ENCODE measurements at regions of chr19 and their contacts with region 1.

Region 1: GRCh38 chr19:38335949-38336637 is 463 bp downstream of the CATSPERG start:
- DNase-seq: peak; percentile 95
- H3K4me3 Mint-ChIP-seq: peak overlapping the region; percentile 95
- H3K27ac Mint-ChIP-seq: peak overlapping the region; percentile 100
- H3K4me1 Mint-ChIP-seq: peaks cover 7% of the 10 kb centered on the region
- H3K27me3 Mint-ChIP-seq: no peaks in the 10 kb centered on the region

Region 2: DNA sequence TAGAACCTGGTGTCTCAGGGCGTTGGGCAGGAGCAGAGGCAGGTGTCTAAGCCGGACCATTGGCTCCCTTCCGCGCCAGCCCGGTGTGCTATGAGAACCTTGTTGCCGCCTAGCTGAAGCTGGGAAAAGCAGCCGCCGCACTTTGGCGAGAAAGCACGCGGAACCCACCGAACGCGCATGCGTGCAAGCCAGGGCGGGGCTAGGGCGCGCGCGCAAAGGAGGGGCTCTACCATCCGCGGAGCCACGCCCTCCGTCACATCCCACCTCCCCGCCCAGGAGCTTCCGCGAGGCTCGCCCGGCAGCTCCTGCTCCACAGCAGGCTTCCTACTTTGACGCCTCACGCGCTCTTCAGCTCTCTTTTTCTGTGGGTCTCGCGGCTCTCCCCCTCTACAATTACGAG is 481.0 kb before region 1 on chr19:
- intact Hi-C with region 1: no loop called
- DNase-seq: peak; percentile 9
- H3K4me3 Mint-ChIP-seq: no peak overlapping the region
- H3K27ac Mint-ChIP-seq: no peak overlapping the region
- H3K4me1 Mint-ChIP-seq: no peaks in the 10 kb centered on the region
- H3K27me3 Mint-ChIP-seq: no peaks in the 10 kb centered on the region

Region 3: DNA sequence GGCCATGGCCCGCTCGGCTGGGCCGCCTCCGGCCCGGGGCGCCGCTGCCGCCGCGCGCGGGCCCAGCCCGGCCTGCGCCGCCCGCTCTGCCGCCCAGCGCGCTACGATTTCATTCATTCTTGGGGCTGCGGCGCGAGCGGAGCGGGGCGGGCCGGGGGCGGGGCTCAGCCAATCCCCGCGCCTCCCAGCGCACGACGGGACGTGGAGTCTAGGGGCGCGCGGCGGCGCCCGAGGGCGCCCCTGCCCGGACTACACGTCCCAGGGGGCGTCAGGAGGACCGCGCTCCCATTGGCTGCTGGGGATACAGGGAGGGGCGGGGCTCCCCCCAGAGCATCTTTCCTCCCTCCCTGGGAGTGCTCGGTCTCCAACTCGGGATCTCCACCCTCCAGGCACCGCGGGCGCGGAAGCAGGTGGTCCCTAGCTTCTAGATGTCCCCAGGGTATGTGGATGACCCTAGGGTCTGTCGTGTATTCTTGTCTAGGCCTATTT is 106.5 kb before region 1 on chr19:
- intact Hi-C with region 1: loop called (anchors 1 kb)
- DNase-seq: peak; percentile 71
- H3K4me3 Mint-ChIP-seq: peak overlapping the region; percentile 26
- H3K27ac Mint-ChIP-seq: no peak overlapping the region
- H3K4me1 Mint-ChIP-seq: peaks cover 10% of the 10 kb centered on the region
- H3K27me3 Mint-ChIP-seq: peaks cover 43% of the 10 kb centered on the region

Region 4: DNA sequence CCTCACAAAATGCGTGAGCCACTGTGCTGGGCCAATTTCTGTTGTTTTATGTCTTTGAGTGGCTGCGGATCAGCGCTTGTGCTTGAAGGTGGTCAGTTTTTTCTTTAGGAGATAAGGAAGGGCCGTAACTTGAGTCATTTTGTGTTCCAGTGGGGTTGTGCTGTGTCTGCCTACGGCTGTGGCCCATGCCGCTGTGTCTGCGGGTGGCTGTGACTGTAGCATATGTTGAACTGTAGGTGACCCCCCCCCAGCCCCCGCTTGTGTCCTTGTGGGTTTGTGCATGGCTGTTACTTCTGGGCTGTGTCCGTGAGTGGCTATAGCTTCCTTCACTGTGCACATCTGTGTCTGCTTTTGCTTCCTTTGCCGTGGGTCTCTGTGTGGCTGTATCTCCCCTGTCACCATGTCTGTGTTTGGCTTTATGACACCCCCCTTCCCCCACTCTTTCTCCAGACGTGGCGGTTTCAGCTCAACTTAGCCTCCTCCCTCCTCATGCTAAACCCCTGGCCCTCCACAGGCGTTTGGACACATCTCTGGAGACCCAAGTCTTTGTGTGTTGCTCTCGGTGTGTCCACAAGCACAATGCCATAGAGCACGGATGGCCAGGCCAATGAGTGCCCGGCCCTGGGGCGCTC is 80.6 kb before region 1 on chr19:
- intact Hi-C with region 1: loop called (anchors 5 kb)
- DNase-seq: no peak
- H3K4me3 Mint-ChIP-seq: peak overlapping the region; percentile 84
- H3K27ac Mint-ChIP-seq: peak overlapping the region; percentile 64
- H3K4me1 Mint-ChIP-seq: peaks cover 23% of the 10 kb centered on the region
- H3K27me3 Mint-ChIP-seq: no peaks in the 10 kb centered on the region

Region 5: GRCh38 chr19:38266981-38267597 is 69.0 kb before region 1 on chr19:
- intact Hi-C with region 1: no loop called
- DNase-seq: no peak
- H3K4me3 Mint-ChIP-seq: peak overlapping the region; percentile 26
- H3K27ac Mint-ChIP-seq: peak overlapping the region; percentile 67
- H3K4me1 Mint-ChIP-seq: peaks cover 58% of the 10 kb centered on the region
- H3K27me3 Mint-ChIP-seq: no peaks in the 10 kb centered on the region

Region 6: DNA sequence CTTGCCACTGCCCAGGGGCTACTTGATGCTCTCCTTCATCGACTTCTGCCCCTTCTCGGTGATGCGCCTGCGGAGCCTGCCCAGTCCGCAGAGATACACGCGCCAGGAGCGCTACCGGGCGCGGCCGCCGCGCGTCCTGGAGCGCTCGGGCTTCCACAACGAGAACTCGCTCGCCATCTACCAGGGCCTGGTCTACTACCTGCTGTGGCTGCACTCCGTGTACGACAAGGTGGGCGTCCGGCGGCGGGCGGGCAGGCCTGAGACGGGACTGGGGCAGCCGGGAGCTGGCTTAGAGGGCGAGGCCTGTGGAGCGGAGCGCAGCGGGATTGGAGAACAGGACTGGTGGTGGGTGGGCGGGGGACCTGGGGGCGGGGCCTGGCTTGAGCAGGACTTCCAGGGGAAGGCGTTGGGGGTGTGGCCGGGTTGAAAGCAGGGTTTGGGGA is 25.6 kb after region 1 on chr19:
- intact Hi-C with region 1: loop called (anchors 1 kb)
- DNase-seq: peak; percentile 77
- H3K4me3 Mint-ChIP-seq: peak overlapping the region; percentile 88
- H3K27ac Mint-ChIP-seq: peak overlapping the region; percentile 81
- H3K4me1 Mint-ChIP-seq: peaks cover 11% of the 10 kb centered on the region
- H3K27me3 Mint-ChIP-seq: peaks cover 33% of the 10 kb centered on the region

Region 7: GRCh38 chr19:38425810-38426466 is 89.8 kb after region 1 on chr19 and contains the start of gene RASGRP4:
- intact Hi-C with region 1: no loop called
- DNase-seq: peak; percentile 46
- H3K4me3 Mint-ChIP-seq: peak within 1 kb of the TSS; percentile 75
- H3K27ac Mint-ChIP-seq: peak within 1 kb of the TSS; percentile 95
- H3K4me1 Mint-ChIP-seq: peaks cover 28% of the 10 kb centered on the region
- H3K27me3 Mint-ChIP-seq: no peaks in the 10 kb centered on the region
- total RNA-seq, gene RASGRP4: 17.6 and 20.0 TPM in 2 replicates